ENCODE measurements at regions of chr21 and their contacts with region 1.

Region 1: GRCh38 chr21:36141513-36141925 is 6.6 kb downstream of the CBR3 start:
- DNase-seq: peak; percentile 91 to 96
- H3K4me3 ChIP-seq: no peak overlapping the region
- H3K27ac ChIP-seq: peak overlapping the region; percentile 66
- H3K4me1 ChIP-seq: peaks cover 9% of the 10 kb centered on the region
- H3K27me3 ChIP-seq: no peaks in the 10 kb centered on the region
- CTCF ChIP-seq: peak; percentile 81

Region 2: GRCh38 chr21:36330904-36331303 is 189.4 kb after region 1 on chr21:
- CTCF ChIA-PET with region 1: interaction called, 6 read pairs
- POLR2A ChIA-PET with region 1: no interaction called
- intact Hi-C with region 1: loop called (anchors 1 kb)
- DNase-seq: peak; percentile 32 to 40
- H3K4me3 ChIP-seq: no peak overlapping the region
- H3K27ac ChIP-seq: no peak overlapping the region
- H3K4me1 ChIP-seq: no peaks in the 10 kb centered on the region
- H3K27me3 ChIP-seq: no peaks in the 10 kb centered on the region
- CTCF ChIP-seq: peak; percentile 72